ENCODE measurements at regions of chr10 and their contacts with region 1.

Region 1: GRCh38 chr10:69248117-69248730 is 28.1 kb downstream of the HKDC1 start:
- DNase-seq: no peak

Region 2: GRCh38 chr10:69383558-69383957 is 135.3 kb after region 1 on chr10:
- in situ Hi-C with region 1: loop called (anchors 5 kb)
- DNase-seq: no peak

Measured in KBM-7 (cell line).